Activated naive CD4-positive, alpha-beta T cell treated with anti-CD3 and anti-CD28 coated beads, Interleukin-2, amount 10 ng/mL, durations not matched to agents 7 days and 5 days (primary cell): ENCODE measurements at regions of chr9 and their contacts with region 1.

Region 1: DNA sequence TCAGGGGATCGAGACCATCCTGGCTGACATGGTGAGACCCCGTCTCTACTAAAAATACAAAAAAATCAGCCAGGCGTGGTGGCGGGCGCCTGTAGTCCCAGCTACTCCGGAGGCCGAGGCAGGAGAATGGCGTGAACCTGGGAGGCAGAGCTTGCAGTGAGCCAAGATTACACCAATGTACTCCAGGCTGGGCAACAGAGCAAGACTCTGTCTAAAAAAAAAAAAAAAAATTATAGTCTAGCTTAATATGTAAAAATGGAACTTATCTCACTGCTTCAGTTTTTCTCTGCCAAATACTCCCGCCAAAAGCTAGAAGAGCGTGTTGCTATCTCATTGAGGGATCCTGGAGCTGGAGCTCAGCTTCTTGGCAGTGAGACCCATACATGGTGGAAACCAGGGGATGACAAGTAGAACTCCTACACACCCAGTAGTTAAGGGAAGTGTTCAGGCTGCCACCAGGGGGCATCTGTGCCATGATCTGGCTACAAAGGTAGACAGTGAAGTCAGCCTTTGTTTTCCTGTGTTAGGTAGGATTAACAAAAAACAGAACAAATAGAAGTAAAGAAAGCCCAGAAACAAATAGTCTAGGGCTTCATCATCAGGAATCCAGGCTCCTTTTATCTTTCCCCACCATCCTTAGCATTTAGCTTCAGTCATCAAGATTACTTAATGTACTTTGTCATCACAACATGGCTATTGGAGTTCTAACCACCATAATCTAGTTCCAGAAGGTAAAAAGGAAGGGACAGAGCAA is 33.6 kb upstream of the GLIPR2 start:
- DNase-seq: peak; percentile 93
- H3K4me3 Mint-ChIP-seq: no peak overlapping the region
- H3K27ac Mint-ChIP-seq: no peak overlapping the region
- H3K4me1 Mint-ChIP-seq: peaks cover 9% of the 10 kb centered on the region
- H3K27me3 Mint-ChIP-seq: no peaks in the 10 kb centered on the region

Region 2: GRCh38 chr9:36126016-36126730 is 23.3 kb after region 1 on chr9:
- CTCF ChIA-PET with region 1: interaction called, 16 read pairs
- DNase-seq: no peak
- H3K4me3 Mint-ChIP-seq: no peak overlapping the region
- H3K27ac Mint-ChIP-seq: no peak overlapping the region
- H3K4me1 Mint-ChIP-seq: peaks cover 15% of the 10 kb centered on the region
- H3K27me3 Mint-ChIP-seq: peaks cover 18% of the 10 kb centered on the region

Region 3: GRCh38 chr9:36142510-36143244 is 39.8 kb after region 1 on chr9:
- CTCF ChIA-PET with region 1: interaction called, 16 read pairs
- DNase-seq: no peak
- H3K4me3 Mint-ChIP-seq: peak overlapping the region; percentile 86
- H3K27ac Mint-ChIP-seq: peak overlapping the region; percentile 95
- H3K4me1 Mint-ChIP-seq: peaks cover 97% of the 10 kb centered on the region
- H3K27me3 Mint-ChIP-seq: peaks cover 18% of the 10 kb centered on the region